ENCODE measurements at regions of chr15 and their contacts with region 1.

Region 1: GRCh38 chr15:74373731-74374647 is 6.5 kb upstream of the CYP11A1 start:
- DNase-seq: peak; percentile 96
- H3K4me3 ChIP-seq: peak overlapping the region; percentile 42 to 63
- H3K27ac ChIP-seq: peak overlapping the region; percentile 58 to 80
- H3K4me1 ChIP-seq: peaks cover 33% of the 10 kb centered on the region
- H3K27me3 ChIP-seq: no peaks in the 10 kb centered on the region
- CTCF ChIP-seq: peak; percentile 71 to 86 (median 79)
- POLR2A ChIP-seq: no peak

Region 2: DNA sequence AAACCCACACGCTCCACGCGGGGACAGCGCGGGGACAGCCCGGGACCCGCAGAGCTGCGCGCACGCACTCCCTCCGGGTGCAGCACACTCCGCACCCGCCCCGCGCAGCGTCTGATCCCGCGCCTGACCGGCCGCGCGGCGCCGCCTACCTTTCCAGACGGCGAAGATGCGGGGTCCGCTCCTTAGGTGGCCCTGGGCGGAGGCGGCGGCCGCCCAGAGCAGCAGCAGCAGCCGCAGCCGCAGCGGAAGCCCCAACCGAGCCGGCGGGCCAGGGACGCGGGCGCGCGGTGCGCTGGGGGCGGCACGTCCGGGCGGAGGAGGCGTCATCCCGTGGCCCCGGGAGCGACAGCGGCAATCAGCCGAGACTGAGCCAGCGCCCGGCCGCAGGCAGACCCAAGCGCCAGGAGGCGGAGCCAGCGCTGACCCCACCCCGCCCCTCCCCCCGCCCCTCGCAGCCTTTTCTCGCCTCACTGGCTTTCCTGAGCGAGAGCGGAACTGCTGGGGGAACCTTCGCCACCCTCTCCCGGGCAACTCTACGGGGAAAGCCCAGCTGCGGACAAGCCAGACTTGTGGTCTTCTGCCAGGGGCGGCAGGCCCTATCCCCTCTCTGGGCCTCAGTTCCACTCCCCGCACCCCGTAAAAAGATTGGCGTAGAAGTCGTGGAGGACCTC is 59.7 kb after region 1 on chr15 and contains the start of gene SEMA7A:
- intact Hi-C with region 1: no loop called
- DNase-seq: peak; percentile 88
- H3K4me3 ChIP-seq: peak within 1 kb of the TSS; percentile 78 to 92
- H3K27ac ChIP-seq: peak within 1 kb of the TSS; percentile 79 to 89
- H3K4me1 ChIP-seq: peaks cover 45% of the 10 kb centered on the region
- H3K27me3 ChIP-seq: no peaks in the 10 kb centered on the region
- CTCF ChIP-seq: no peak
- POLR2A ChIP-seq: peak; percentile 76
- total RNA-seq, gene SEMA7A: 217 to 220 TPM

Region 3: GRCh38 chr15:74620636-74621545 is 246.9 kb after region 1 on chr15:
- intact Hi-C with region 1: loop called (anchors 10 kb)
- DNase-seq: peak; percentile 89
- H3K4me3 ChIP-seq: no peak overlapping the region
- H3K27ac ChIP-seq: no peak overlapping the region
- H3K4me1 ChIP-seq: peaks cover 28% of the 10 kb centered on the region
- H3K27me3 ChIP-seq: no peaks in the 10 kb centered on the region
- CTCF ChIP-seq: peak; percentile 57 to 79 (median 57)
- POLR2A ChIP-seq: no peak

Region 4: GRCh38 chr15:74768771-74769342 is 394.9 kb after region 1 on chr15:
- intact Hi-C with region 1: loop called (anchors 5 kb)
- DNase-seq: peak; percentile 86
- H3K4me3 ChIP-seq: no peak overlapping the region
- H3K27ac ChIP-seq: no peak overlapping the region
- H3K4me1 ChIP-seq: peaks cover 10% of the 10 kb centered on the region
- H3K27me3 ChIP-seq: no peaks in the 10 kb centered on the region
- CTCF ChIP-seq: peak; percentile 84 to 92 (median 87)
- POLR2A ChIP-seq: no peak